Endothelial cell of umbilical vein (primary cell): ENCODE measurements at regions of chr12 and their contacts with region 1.

Region 1: DNA sequence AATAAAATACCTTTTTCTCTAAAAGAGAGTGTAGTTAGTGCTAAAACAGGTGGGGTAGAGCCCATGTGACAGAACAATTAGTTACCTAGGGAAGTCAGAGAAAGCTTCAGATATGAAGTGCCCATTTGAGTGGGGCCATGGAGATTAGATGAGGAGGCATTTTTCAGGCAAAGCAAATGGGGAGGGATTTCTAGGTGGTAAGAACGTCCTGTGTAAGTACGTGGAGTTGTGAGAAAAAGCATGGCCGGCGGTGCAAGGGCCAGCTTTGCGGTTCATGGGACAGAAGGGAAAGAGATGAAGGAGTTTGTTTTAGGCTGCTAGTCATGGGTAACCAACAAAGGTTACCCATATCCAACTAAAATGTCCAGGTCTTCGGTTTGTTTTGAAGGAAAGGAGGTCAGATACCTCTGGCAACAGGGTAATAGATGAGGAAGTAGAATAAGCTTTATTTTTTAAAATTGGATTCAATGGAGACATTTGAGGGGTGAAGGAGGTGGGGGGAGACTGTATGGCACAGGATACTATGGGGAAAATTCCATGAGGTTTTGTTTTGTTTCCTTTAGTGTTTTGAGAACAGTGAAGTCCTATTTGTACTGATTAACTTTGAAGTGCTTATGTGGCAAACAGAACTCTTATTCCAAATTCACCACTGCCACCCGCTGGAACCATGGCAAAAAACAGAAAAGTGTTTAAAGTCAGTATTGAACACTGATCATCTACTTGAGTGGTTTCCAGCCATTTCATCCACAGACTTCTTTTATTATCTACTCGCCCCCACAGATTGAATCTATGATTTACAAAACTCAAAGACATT is 10.0 kb upstream of the SNRPF start:
- DNase-seq: peak; percentile 80
- H3K4me3 ChIP-seq: no peak overlapping the region
- H3K27ac ChIP-seq: no peak overlapping the region
- H3K4me1 ChIP-seq: no peaks in the 10 kb centered on the region
- H3K27me3 ChIP-seq: peaks cover 0 to 12% of the 10 kb centered on the region in 2 experiments
- CTCF ChIP-seq: peak; percentile 30 to 31
- POLR2A ChIP-seq: no peak

Region 2: GRCh38 chr12:95497031-95497430 is 351.8 kb before region 1 on chr12:
- CTCF ChIA-PET with region 1: no interaction called
- POLR2A ChIA-PET with region 1: no interaction called
- dilution Hi-C with region 1: no loop called
- intact Hi-C with region 1: no loop called
- DNase-seq: no peak
- H3K4me3 ChIP-seq: no peak overlapping the region
- H3K27ac ChIP-seq: no peak overlapping the region
- H3K4me1 ChIP-seq: no peaks in the 10 kb centered on the region
- H3K27me3 ChIP-seq: no peaks in the 10 kb centered on the region
- CTCF ChIP-seq: no peak
- POLR2A ChIP-seq: no peak

Region 3: DNA sequence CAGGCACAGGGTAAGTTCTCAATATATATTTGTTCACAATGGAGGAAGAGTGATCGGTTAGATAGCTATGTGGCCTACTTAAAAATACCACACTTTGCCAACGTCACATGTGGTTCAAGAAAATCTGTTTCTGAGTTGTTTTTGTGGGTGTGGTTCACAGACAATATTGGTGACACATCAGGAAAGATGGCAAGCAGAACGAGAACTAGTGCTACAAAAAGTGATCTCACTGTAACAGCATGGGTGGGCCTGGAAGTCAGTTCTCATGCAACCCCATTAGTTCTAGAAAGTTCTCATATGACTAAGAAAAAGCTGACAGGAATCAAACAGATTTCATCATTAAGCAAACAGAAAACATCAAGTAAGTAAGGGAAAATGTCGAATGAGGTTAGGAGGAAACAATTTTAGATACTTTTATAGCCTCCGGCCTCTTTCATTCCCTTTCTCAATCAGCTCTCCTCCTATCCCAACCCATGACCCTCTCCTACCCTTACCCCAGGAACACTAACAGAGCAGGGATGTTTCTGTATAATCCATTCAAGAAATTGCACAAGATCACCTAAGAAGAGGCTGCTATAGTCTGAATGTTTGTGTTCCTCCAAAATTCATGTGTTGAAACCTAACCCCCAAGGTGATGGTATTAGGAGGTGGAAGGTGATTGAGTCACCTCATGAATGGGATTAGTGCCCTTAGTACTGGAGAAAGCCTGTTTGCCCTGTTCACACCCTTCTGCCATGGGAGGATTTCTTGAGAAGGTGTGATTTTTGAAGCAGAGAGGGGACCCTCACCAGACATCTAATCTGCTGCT is 42.7 kb before region 1 on chr12:
- CTCF ChIA-PET with region 1: no interaction called
- POLR2A ChIA-PET with region 1: interaction called, 3 read pairs
- dilution Hi-C with region 1: loop called (anchors 5 kb)
- intact Hi-C with region 1: no loop called
- DNase-seq: peak; percentile 85
- H3K4me3 ChIP-seq: no peak overlapping the region
- H3K27ac ChIP-seq: peak overlapping the region; percentile 74
- H3K4me1 ChIP-seq: peaks cover 40% of the 10 kb centered on the region
- H3K27me3 ChIP-seq: no peaks in the 10 kb centered on the region
- CTCF ChIP-seq: no peak
- POLR2A ChIP-seq: no peak

Region 4: DNA sequence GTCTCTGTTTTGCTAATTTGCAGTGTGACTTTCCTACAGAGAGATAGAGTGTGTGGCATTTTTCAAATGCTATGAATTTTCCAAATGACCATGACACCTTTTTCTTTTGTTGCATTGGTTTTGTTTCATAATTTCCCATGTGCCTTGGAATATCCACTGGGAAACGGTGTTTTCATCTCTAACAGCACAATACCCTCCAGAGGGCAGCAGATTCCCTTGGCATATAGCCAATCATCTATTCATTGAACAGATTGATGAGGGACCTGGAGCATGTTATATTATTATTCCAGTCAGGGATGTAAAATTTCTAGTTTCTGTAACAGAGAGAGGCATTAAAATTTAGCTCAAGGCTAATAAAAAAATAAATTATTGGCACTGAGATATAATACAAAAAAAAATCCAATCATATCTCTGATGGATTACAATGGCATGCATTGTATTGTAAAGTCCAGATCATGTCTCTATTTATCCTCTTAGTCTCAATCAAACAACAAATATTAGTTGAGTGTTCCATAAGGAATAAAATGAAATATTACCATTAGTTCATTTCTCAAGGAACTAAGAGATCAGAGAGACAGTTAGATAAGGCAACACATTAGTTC is 28.6 kb before region 1 on chr12:
- CTCF ChIA-PET with region 1: interaction called, 14 read pairs
- POLR2A ChIA-PET with region 1: no interaction called
- dilution Hi-C with region 1: no loop called
- intact Hi-C with region 1: loop called (anchors 1 kb)
- DNase-seq: peak; percentile 75
- H3K4me3 ChIP-seq: no peak overlapping the region
- H3K27ac ChIP-seq: no peak overlapping the region
- H3K4me1 ChIP-seq: no peaks in the 10 kb centered on the region
- H3K27me3 ChIP-seq: no peaks in the 10 kb centered on the region
- CTCF ChIP-seq: peak; percentile 51 to 61
- POLR2A ChIP-seq: no peak